ENCODE measurements at regions of chr1 and their contacts with region 1.

Region 1: DNA sequence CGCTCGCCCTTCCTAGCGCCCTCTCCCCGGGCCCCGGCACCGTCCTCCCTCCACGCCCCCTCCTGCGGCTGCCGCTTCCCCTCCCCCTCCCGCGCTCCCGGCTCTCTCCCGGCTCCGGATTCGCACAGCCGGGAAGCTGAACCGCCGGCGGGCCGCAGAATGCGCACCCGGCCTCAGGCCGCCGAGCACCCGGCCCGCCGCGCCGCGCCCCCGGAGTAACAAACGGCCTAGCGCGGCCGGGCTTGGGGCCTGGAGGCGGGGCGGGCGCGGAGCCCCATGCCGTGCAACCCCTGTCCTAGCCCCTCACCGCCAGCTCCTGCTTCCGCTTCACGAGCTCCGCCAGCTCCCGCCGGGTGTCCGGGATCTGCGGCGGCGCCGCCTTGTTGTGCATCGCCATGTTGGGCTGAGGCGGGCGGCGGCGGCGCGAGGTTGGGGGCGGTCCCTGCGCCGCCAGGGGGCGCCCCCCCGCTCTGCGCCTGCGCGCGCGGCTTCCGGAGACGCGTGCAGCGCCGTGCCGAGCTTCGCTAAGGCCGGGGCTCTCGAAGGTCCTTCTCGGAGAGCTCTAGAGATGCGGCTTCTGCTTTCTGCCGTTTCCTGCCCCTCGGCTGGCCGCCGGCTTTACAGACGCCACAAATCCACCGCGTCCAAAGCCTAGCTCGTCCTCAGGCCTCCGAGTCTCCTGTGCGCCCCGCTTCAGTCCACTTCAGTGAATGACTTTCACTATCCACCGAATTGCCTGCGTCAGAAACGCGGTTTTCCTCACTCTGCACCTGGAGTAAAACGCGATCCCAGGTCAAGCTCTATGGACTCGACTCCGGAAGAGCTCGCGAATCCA is at the start of gene MEAF6:
- DNase-seq: peak; percentile 93
- total RNA-seq, gene MEAF6: 40.1 TPM

Region 2: GRCh38 chr1:37553927-37554808 is 39.6 kb after region 1 on chr1 and contains the start of gene SNIP1:
- intact Hi-C with region 1: loop called (anchors 2 kb)
- DNase-seq: peak; percentile 97
- total RNA-seq, gene SNIP1: 10.5 TPM

Measured in cardiac septum (tissue), 1 donor.